ENCODE measurements at regions of chr2 and their contacts with region 1.

Region 1: GRCh38 chr2:159921752-159922404 is 123.9 kb upstream of the CD302 start:
- DNase-seq: peak; percentile 92
- H3K4me3 Mint-ChIP-seq: no peak overlapping the region
- H3K27ac Mint-ChIP-seq: no peak overlapping the region
- H3K4me1 Mint-ChIP-seq: peaks cover 22% of the 10 kb centered on the region
- H3K27me3 Mint-ChIP-seq: peaks cover 27% of the 10 kb centered on the region

Region 2: DNA sequence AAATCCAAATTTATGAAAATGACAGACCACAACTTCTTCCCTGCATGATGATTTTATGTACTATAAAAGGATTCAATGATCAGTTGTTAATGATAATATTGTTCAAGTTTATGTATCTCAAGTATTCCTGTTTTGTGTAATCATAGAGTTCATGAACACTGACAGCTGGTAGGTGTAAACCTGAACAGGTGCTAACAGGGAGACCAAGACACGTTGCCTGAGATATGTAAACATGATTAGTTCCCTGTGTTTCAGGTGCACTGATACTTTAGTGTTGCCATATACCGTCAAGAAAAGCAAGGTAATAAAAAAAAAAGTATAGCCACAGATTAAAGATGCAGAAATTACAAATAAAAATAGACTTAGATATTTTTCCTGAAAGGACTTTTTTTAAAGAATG is 437.3 kb before region 1 on chr2:
- CTCF ChIA-PET with region 1: no interaction called
- intact Hi-C with region 1: no loop called
- DNase-seq: no peak
- H3K4me3 Mint-ChIP-seq: no peak overlapping the region
- H3K27ac Mint-ChIP-seq: no peak overlapping the region
- H3K4me1 Mint-ChIP-seq: no peaks in the 10 kb centered on the region
- H3K27me3 Mint-ChIP-seq: no peaks in the 10 kb centered on the region

Region 3: GRCh38 chr2:159755788-159756187 is 166.1 kb before region 1 on chr2:
- CTCF ChIA-PET with region 1: interaction called, 3 read pairs
- intact Hi-C with region 1: loop called (anchors 1 kb)
- DNase-seq: peak; percentile 54
- H3K4me3 Mint-ChIP-seq: no peak overlapping the region
- H3K27ac Mint-ChIP-seq: no peak overlapping the region
- H3K4me1 Mint-ChIP-seq: peaks cover 22% of the 10 kb centered on the region
- H3K27me3 Mint-ChIP-seq: no peaks in the 10 kb centered on the region

Region 4: GRCh38 chr2:159879051-159879604 is 42.8 kb before region 1 on chr2:
- CTCF ChIA-PET with region 1: interaction called, 3 read pairs
- intact Hi-C with region 1: loop called (anchors 1 kb)
- DNase-seq: peak; percentile 76
- H3K4me3 Mint-ChIP-seq: no peak overlapping the region
- H3K27ac Mint-ChIP-seq: peak overlapping the region; percentile 77
- H3K4me1 Mint-ChIP-seq: peaks cover 45% of the 10 kb centered on the region
- H3K27me3 Mint-ChIP-seq: no peaks in the 10 kb centered on the region

Region 5: GRCh38 chr2:159904127-159904958 is 17.5 kb before region 1 on chr2:
- CTCF ChIA-PET with region 1: interaction called, 30 read pairs
- intact Hi-C with region 1: loop called (anchors 1 kb)
- DNase-seq: peak; percentile 82
- H3K4me3 Mint-ChIP-seq: peak within 1 kb of the TSS; percentile 93
- H3K27ac Mint-ChIP-seq: peak within 1 kb of the TSS; percentile 93
- H3K4me1 Mint-ChIP-seq: peaks cover 58% of the 10 kb centered on the region
- H3K27me3 Mint-ChIP-seq: no peaks in the 10 kb centered on the region

Region 6: DNA sequence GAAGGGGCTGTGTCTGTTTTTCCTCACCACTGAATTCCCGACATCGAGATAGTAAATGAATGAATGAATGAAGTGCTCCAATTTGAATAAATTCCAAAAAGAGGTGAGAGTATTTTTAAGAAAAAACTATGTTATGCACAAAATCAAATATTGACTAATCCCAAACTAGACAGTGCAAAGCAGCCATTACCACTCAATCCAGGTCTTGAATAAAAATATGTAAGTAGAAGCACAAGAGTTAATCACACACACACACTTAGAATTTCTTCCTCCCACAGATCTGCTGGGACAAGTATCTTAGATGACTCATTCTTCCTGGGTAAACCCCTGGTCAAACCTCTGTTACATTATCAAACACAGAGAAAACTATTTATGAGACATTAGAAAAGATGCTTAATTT is 38.5 kb after region 1 on chr2:
- CTCF ChIA-PET with region 1: interaction called, 3 read pairs
- intact Hi-C with region 1: loop called (anchors 1 kb)
- DNase-seq: no peak
- H3K4me3 Mint-ChIP-seq: no peak overlapping the region
- H3K27ac Mint-ChIP-seq: no peak overlapping the region
- H3K4me1 Mint-ChIP-seq: peaks cover 18% of the 10 kb centered on the region
- H3K27me3 Mint-ChIP-seq: peaks cover 4% of the 10 kb centered on the region

Region 7: DNA sequence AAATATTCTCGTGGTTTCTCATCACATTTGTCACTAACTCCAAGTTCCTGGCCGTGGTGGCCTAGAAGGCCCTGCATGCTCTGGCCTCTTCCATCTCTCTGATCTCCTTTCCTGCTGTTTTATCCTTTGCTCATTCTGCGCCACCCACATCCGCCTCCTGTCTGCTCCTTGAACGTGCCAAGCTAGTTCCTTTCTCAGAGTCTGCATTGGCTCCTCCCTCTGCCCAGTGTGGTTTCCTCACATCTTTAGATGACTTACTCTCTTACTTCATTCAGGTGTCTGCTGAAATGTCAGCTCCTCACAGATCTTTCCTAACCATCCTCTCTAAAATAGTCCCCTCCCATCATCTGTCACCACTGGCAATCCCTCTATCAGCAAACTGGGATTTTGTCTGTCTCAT is 730.4 kb after region 1 on chr2:
- CTCF ChIA-PET with region 1: no interaction called
- intact Hi-C with region 1: no loop called
- DNase-seq: peak; percentile 87
- H3K4me3 Mint-ChIP-seq: no peak overlapping the region
- H3K27ac Mint-ChIP-seq: peak overlapping the region; percentile 17
- H3K4me1 Mint-ChIP-seq: peaks cover 30% of the 10 kb centered on the region
- H3K27me3 Mint-ChIP-seq: no peaks in the 10 kb centered on the region